Ovary (tissue), 10 donors: ENCODE measurements at regions of chr6 and their contacts with region 1.

Region 1: DNA sequence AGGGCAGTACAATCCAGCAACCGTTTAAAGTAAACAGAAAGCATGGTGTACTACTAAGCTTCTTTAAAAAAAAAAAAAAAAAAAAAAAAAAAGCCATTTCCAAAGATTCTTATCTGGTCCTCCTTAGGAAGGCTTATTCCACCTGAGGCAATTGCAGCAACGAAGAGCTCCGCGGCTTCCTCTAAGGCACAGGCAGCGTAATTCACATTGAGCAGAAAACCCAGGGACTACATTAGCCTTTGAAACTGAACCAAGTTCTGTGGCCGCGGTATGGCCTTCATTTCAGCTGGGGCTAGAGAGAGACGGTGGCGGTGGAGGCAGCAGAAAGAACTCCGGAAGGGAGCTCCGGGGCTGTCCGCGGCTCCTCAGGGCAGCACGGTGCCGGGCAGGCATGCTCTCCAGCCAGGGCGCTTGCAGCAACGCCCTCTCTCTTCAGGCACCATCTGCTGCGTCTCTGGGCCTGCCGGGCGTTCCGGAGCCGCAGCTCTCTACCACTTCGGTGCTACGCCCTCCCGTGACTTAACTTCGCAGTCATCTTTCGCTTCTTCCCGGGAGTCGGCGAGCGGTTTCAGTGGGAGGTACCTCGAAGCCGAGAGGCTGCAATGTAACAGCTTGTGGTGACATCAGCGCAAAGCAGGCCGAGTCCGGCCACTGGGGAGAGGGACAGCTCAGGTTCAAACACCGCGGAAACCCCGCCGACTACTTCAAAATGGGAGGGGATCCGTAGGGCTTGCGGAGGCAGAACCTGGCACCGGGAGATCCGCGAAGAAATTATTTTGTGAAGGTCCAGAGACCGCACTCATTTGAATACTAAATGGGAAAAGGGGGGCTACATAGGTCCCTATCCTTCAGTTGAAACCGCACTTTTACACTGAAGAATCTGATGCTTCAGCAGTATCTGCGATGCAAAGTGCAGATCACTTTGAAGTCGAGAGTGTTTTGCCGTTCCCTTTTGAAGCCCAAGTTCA is 100.0 kb downstream of the DST start:
- DNase-seq: peak; percentile 91 to 95 (median 93)
- H3K4me3 ChIP-seq: peak overlapping the region; percentile 61
- H3K27ac ChIP-seq: peak overlapping the region; percentile 76 to 93
- H3K4me1 ChIP-seq: peaks cover 3% of the 10 kb centered on the region
- H3K27me3 ChIP-seq: no peaks in the 10 kb centered on the region
- CTCF ChIP-seq: peak; percentile 15 to 33 (median 31)
- EP300 ChIP-seq: no peak
- POLR2A ChIP-seq: peak; percentile 81

Region 2: GRCh38 chr6:55943329-55943728 is 599.3 kb before region 1 on chr6:
- intact Hi-C with region 1: no loop called
- DNase-seq: no peak
- H3K4me3 ChIP-seq: no peak overlapping the region
- H3K27ac ChIP-seq: no peak overlapping the region
- H3K4me1 ChIP-seq: no peaks in the 10 kb centered on the region
- H3K27me3 ChIP-seq: no peaks in the 10 kb centered on the region
- CTCF ChIP-seq: no peak
- EP300 ChIP-seq: no peak
- POLR2A ChIP-seq: no peak

Region 3: GRCh38 chr6:56364827-56365313 is 177.8 kb before region 1 on chr6:
- intact Hi-C with region 1: loop called in 1 of 4 experiments (anchors 5 kb)
- DNase-seq: no peak
- H3K4me3 ChIP-seq: no peak overlapping the region
- H3K27ac ChIP-seq: no peak overlapping the region
- H3K4me1 ChIP-seq: no peaks in the 10 kb centered on the region
- H3K27me3 ChIP-seq: no peaks in the 10 kb centered on the region
- CTCF ChIP-seq: no peak
- EP300 ChIP-seq: no peak
- POLR2A ChIP-seq: no peak

Region 4: DNA sequence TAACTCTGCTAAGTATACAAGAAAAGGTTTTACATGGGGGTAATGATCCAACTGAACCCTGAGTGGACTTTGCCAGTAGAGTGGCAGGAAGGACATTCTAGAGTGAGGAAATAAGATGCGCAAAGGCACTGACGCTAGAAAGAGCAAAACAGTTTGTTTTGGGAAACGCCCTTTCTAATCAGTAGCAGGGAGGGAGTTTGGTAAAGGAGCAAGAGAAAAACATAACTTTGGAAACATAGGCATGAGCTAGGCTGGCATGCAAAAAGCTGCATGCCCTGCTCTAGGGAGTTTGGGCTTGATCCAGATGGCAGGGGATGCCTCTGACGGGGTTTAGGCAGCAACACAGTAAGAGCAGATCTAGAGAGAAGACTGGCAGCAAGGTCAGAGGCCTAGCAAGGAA is 35.1 kb before region 1 on chr6:
- intact Hi-C with region 1: loop called in 1 of 4 experiments (anchors 5 kb)
- DNase-seq: no peak
- H3K4me3 ChIP-seq: no peak overlapping the region
- H3K27ac ChIP-seq: peak overlapping the region in 1 of 2 donors; percentile 68
- H3K4me1 ChIP-seq: peaks cover 18% of the 10 kb centered on the region
- H3K27me3 ChIP-seq: no peaks in the 10 kb centered on the region
- CTCF ChIP-seq: no peak
- EP300 ChIP-seq: no peak
- POLR2A ChIP-seq: no peak

Region 5: DNA sequence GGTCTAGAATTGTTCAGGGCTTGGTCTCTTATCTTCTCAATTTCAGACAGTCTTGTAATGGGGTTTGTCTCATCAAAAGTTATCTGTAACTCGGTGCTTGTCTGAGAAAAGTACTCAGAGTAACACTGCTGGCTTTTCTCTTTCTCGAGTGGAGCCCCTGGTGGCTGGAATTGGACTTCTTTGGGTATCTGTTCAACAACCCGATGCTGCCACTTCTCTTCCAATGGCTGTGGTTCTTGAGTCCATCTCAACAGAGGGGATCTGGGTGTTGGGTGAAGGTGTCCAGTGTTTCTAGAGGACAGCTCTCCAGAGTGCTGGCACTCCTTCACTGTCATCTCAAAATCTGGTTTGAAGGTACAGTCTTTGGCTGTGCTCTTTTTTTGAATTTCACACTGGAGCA is 75.4 kb after region 1 on chr6:
- intact Hi-C with region 1: no loop called
- DNase-seq: no peak
- H3K4me3 ChIP-seq: no peak overlapping the region
- H3K27ac ChIP-seq: no peak overlapping the region
- H3K4me1 ChIP-seq: no peaks in the 10 kb centered on the region
- H3K27me3 ChIP-seq: no peaks in the 10 kb centered on the region
- CTCF ChIP-seq: no peak
- EP300 ChIP-seq: no peak
- POLR2A ChIP-seq: no peak